Calu3 (cell line): ENCODE measurements at regions of chr1 and their contacts with region 1.

Region 1: GRCh38 chr1:224747578-224747977 is 131.5 kb downstream of the CNIH3 start:
- DNase-seq: no peak
- H3K4me3 Mint-ChIP-seq: no peak overlapping the region
- H3K27ac Mint-ChIP-seq: no peak overlapping the region
- H3K4me1 Mint-ChIP-seq: no peaks in the 10 kb centered on the region
- H3K27me3 Mint-ChIP-seq: peaks cover 77% of the 10 kb centered on the region
- CTCF ChIP-seq: no peak

Region 2: GRCh38 chr1:224959115-224959514 is 211.5 kb after region 1 on chr1:
- CTCF ChIA-PET with region 1: interaction called, 10 read pairs
- intact Hi-C with region 1: no loop called
- DNase-seq: no peak
- H3K4me3 Mint-ChIP-seq: no peak overlapping the region
- H3K27ac Mint-ChIP-seq: no peak overlapping the region
- H3K4me1 Mint-ChIP-seq: no peaks in the 10 kb centered on the region
- H3K27me3 Mint-ChIP-seq: no peaks in the 10 kb centered on the region
- CTCF ChIP-seq: no peak